ENCODE measurements at regions of chr11 and their contacts with region 1.

Region 1: GRCh38 chr11:5564259-5565019 is 16.1 kb upstream of the OR52H1 start:
- DNase-seq: no peak
- ATAC-seq: no peak
- H3K4me3 ChIP-seq: no peak overlapping the region
- H3K27ac ChIP-seq: no peak overlapping the region
- H3K4me1 ChIP-seq: no peaks in the 10 kb centered on the region
- H3K27me3 ChIP-seq: no peaks in the 10 kb centered on the region

Region 2: DNA sequence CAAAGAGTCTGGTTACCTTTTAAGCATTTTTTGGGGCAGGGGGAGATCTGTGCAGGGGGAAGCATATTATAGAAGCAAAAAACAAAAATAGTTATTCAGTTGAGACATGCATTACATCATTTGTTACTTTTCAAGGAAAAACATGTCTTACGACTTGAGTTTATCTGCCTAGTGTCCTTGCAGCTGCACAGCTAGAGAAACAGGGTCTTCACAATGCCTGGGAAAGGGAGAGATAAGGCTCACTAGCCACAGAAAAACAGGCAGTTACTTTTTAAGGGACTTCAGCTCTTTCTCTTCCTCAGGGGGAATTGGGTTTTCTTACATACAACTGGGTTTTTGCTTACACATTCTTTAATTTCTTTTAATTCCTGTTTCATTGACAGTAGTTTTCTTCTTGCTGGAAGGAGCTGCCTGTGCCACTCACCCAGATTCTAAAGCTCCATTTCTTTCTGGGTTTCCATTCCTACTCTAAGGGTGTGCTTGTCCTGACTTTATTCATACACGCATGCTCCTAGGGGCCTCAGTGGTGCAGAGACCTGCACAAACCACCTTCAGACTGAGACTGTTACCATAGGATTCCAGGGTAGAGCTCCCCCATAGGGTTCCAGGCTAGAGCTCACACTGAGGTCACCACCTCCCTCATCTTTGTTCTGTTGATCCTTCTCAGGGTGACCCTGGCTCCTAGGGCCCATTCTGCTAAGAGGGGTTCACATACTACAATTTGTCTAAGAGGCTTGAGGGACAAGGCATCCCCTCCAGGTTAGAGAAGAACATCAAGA is 33.2 kb before region 1 on chr11:
- intact Hi-C with region 1: loop called in 1 of 4 experiments (anchors 2 kb)
- DNase-seq: no peak
- ATAC-seq: no peak
- H3K4me3 ChIP-seq: no peak overlapping the region
- H3K27ac ChIP-seq: no peak overlapping the region
- H3K4me1 ChIP-seq: no peaks in the 10 kb centered on the region
- H3K27me3 ChIP-seq: no peaks in the 10 kb centered on the region

Region 3: DNA sequence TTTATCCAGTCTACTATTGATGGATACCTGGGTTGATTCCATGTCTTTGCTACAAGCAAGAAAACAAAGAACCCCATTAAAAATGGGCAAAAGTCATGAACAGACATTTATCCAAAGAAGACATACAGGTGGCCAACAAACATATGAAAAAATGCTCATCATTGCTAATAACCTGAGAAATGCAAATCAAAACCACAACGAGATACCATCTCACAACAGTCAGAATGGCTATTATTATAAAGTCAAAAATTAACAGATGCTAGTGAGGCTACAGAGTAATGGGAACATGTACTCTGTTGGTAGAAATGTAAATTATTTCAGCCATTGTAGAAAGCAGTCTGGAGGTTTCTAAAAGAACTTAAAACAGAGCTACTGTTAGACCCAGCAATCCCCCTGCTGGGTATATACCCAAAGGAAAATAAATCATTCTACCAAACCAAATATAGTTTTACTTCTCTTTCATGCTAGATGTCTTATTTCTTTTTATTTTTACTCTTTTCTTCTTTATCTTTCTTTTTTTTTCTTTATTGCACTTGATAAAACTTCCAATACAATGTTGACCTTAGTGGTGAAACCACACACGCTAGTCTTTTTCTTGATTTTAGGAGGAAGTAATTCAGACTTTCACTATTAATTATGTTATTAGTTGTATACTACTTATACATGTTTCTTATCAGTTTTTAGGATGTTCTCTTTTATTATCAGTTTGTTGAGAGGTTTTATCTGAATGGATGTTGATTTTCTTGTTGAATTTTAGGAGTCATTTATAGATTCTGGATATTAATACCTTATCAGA is 139.5 kb after region 1 on chr11:
- intact Hi-C with region 1: no loop called
- DNase-seq: no peak
- ATAC-seq: no peak
- H3K4me3 ChIP-seq: no peak overlapping the region
- H3K27ac ChIP-seq: no peak overlapping the region
- H3K4me1 ChIP-seq: no peaks in the 10 kb centered on the region
- H3K27me3 ChIP-seq: no peaks in the 10 kb centered on the region

Measured in right cardiac atrium (tissue), 5 donors.